Activated CD4-positive, alpha-beta memory T cell treated with anti-CD3 and anti-CD28 coated beads for 36 hours (primary cell): ENCODE measurements at regions of chr18 and their contacts with region 1.

Region 1: GRCh38 chr18:76398896-76399612 is 96.0 kb downstream of the ZNF516 start:
- DNase-seq: peak; percentile 83
- H3K4me3 Mint-ChIP-seq: no peak overlapping the region
- H3K27ac Mint-ChIP-seq: no peak overlapping the region
- H3K4me1 Mint-ChIP-seq: peaks cover 5% of the 10 kb centered on the region
- H3K27me3 Mint-ChIP-seq: no peaks in the 10 kb centered on the region

Region 2: GRCh38 chr18:76388891-76389423 is 10.1 kb before region 1 on chr18:
- CTCF ChIA-PET with region 1: interaction called, 13 read pairs
- POLR2A ChIA-PET with region 1: no interaction called
- intact Hi-C with region 1: no loop called
- DNase-seq: no peak
- H3K4me3 Mint-ChIP-seq: no peak overlapping the region
- H3K27ac Mint-ChIP-seq: no peak overlapping the region
- H3K4me1 Mint-ChIP-seq: peaks cover 14% of the 10 kb centered on the region
- H3K27me3 Mint-ChIP-seq: peaks cover 4% of the 10 kb centered on the region

Region 3: DNA sequence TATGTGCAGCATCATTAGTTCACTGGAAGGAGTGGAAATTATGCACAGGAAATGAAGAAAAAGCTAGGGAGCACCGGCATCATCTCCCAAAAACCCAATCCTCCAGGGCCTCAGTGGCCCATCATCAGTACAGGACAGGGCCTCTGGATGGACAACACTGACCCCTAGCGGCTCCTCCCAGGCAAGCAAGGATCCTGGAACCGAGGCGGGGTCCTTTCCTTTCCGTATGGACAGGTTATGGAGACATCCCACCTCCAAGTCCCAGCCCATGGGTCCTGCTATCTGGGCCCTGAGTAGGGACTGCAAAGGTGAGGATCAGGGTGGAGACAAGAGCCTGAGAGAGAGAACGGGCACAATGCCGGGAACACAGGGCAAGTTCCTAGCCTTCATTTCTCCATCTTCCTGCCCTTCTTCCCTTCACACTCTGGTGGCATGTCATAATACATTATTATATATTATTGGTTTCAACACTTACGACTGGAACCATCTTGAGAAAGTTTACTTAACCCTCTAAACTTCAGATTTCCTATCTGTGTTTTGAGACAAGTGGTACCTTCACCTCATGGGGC is 27.8 kb after region 1 on chr18:
- CTCF ChIA-PET with region 1: interaction called, 29 read pairs
- POLR2A ChIA-PET with region 1: no interaction called
- intact Hi-C with region 1: loop called (anchors 1 kb)
- DNase-seq: peak; percentile 45
- H3K4me3 Mint-ChIP-seq: no peak overlapping the region
- H3K27ac Mint-ChIP-seq: no peak overlapping the region
- H3K4me1 Mint-ChIP-seq: no peaks in the 10 kb centered on the region
- H3K27me3 Mint-ChIP-seq: peaks cover 2% of the 10 kb centered on the region

Region 4: DNA sequence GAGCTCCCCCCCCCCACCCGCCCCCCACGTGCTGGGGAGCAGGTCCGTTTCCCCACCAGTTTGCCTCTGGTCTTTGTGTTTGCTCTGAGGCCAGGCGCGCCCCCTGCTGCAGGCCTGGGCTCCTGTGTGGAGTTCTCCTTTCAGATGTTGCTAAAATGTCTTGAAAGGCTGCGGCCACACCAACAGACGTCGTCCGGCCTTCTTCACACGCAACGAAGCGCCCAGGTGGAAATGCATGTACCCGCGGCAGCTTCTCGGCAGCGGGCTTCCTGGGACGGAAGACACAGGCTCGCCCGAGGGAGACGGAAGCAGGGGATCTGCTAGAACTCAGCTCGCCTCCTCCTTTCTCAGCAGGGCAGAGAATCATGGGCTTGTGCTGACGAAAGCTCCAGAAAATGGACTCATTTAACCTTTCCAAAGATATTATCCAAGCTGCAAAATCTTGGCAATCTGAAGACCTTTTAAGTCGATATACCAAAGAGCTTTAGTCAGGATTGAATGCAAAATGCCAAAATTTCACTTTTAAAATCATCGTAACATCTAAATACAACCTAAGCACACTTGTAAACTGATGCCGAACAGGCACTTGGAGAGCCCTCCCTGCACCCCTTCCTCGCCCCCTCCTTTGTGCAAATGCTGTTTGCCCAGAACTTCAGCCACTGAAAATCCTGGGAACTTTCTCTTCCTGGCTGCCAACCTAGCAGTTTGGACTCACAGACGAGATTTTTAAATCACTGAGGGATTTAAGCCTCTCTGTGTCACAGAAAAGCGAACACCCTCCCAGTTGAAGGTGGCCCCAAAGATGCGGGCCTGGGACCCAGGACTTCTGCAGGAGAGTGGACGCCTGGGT is 221.5 kb after region 1 on chr18:
- CTCF ChIA-PET with region 1: interaction called, 4 read pairs
- POLR2A ChIA-PET with region 1: no interaction called
- intact Hi-C with region 1: loop called (anchors 5 kb)
- DNase-seq: peak; percentile 38
- H3K4me3 Mint-ChIP-seq: no peak overlapping the region
- H3K27ac Mint-ChIP-seq: no peak overlapping the region
- H3K4me1 Mint-ChIP-seq: peaks cover 4% of the 10 kb centered on the region
- H3K27me3 Mint-ChIP-seq: peaks cover 33% of the 10 kb centered on the region

Region 5: DNA sequence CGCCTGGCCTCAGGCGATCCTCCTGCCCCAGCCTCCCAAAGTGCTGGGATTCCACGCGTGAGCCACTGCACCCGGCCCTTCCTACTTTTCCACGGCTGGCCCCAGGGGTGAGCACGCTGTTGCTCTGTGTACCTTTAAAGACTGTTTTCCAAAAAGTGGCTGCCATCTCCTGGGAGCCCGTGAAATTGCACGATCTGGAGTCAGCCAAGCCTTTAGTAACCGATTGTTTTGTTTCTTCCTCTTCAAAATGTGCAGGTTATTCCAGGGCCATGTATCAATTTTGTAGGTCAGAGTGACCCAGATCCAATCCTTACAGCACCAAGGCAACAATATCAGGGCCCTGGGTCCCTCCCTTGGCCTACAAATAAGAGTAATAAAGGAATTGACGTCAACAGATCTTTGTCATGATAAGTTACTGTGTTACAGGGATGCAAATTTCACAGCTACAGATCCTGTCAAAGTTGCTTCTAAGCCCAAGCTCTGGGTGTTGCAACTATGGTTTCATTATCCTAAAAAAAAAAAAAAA is 287.7 kb after region 1 on chr18:
- CTCF ChIA-PET with region 1: interaction called, 7 read pairs
- POLR2A ChIA-PET with region 1: no interaction called
- intact Hi-C with region 1: loop called (anchors 1 kb)
- DNase-seq: peak; percentile 27
- H3K4me3 Mint-ChIP-seq: no peak overlapping the region
- H3K27ac Mint-ChIP-seq: peak overlapping the region; percentile 10
- H3K4me1 Mint-ChIP-seq: peaks cover 16% of the 10 kb centered on the region
- H3K27me3 Mint-ChIP-seq: peaks cover 39% of the 10 kb centered on the region